Aorta (tissue), 5 donors: ENCODE measurements at regions of chr15 and their contacts with region 1.

Region 1: DNA sequence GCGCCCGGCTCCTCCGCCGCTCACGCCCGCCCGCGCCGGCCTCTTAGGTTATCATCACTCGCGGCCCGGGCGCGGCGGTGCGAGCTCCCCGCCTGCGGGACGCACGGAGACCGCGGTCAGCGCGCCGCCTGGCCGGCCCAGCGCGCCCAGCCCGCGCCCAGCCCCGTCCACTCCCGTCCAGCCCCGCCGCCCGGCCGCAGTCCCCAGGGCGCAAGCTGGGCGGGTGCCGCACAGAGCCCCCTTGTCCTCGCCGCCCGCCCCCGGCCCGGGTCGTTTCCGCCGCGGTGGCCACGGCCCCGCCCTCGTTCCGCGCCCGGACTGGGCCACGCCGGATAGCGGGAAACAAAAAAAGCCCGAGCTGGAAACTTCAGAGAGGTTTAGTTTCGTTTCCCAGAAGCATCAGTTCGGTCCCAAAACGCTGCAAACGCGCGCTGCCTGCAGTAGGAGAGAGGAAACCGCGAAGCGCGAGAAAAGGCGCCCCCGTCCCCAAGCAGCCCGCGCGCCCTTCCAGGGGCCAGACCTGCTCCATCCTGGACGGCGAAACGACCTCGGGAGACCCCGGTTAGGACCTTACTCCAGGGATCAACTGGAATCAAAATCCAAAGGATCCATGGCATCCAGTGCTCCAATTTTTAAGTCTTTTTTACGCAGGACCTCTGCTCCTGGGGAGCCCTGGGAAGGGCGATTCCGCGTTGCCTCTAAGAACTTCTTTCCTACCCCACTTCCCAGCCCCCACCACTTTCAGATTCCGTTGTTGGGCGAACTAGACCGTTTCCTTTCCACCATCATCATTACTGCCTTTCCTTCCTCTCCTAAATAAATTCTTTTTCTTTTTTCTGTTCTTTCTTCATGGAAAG is at the start of gene ATP10A:
- DNase-seq: peak; percentile 68 to 88
- ATAC-seq: peak; percentile 24
- H3K4me3 ChIP-seq: peak within 1 kb of the TSS; percentile 64 to 96
- H3K27ac ChIP-seq: peak within 1 kb of the TSS; percentile 77 to 82
- H3K4me1 ChIP-seq: no peaks in the 10 kb centered on the region
- H3K27me3 ChIP-seq: no peaks in the 10 kb centered on the region
- total RNA-seq, gene ATP10A: 19.9 to 55.0 TPM

Region 2: GRCh38 chr15:25532269-25533140 is 330.8 kb before region 1 on chr15:
- intact Hi-C with region 1: no loop called
- DNase-seq: no peak
- ATAC-seq: no peak
- H3K4me3 ChIP-seq: no peak overlapping the region
- H3K27ac ChIP-seq: no peak overlapping the region
- H3K4me1 ChIP-seq: peaks cover 2 to 3% of the 10 kb centered on the region in 2 donors
- H3K27me3 ChIP-seq: no peaks in the 10 kb centered on the region

Region 3: GRCh38 chr15:25693321-25694237 is 169.8 kb before region 1 on chr15:
- intact Hi-C with region 1: loop called in 1 of 2 experiments (anchors 5 kb)
- DNase-seq: peak; percentile 62 to 81
- ATAC-seq: peak; percentile 73
- H3K4me3 ChIP-seq: no peak overlapping the region
- H3K27ac ChIP-seq: no peak overlapping the region
- H3K4me1 ChIP-seq: no peaks in the 10 kb centered on the region
- H3K27me3 ChIP-seq: no peaks in the 10 kb centered on the region

Region 4: DNA sequence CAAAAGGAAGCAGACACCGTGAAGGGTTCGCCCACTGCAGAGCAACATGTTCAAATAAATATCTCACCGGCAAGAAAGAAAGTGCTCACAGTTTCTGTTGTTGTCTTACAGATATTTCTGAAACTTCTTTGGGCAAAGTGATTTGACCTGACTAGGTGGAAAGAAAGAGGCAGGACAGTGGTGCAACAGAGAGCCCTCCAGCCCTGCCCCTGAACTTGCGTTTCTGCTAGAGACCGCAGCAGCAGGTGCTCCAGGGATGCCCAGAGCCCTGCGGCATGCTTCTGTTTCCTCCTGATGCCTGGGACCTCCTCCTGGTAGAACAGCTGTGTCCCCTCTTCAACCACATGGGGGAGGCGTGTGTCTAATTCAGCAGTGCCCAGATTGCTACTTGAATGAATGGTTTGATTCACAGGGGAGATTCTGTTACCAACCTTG is 123.6 kb before region 1 on chr15:
- intact Hi-C with region 1: loop called (anchors 5 kb)
- DNase-seq: no peak
- ATAC-seq: no peak
- H3K4me3 ChIP-seq: no peak overlapping the region
- H3K27ac ChIP-seq: peak overlapping the region in 1 of 2 donors; percentile 56
- H3K4me1 ChIP-seq: peaks cover 0 to 22% of the 10 kb centered on the region in 2 donors
- H3K27me3 ChIP-seq: no peaks in the 10 kb centered on the region

Region 5: GRCh38 chr15:25830844-25831451 is 32.4 kb before region 1 on chr15:
- intact Hi-C with region 1: loop called in 1 of 2 experiments (anchors 5 kb)
- DNase-seq: peak; percentile 88 to 93
- ATAC-seq: peak; percentile 90
- H3K4me3 ChIP-seq: no peak overlapping the region
- H3K27ac ChIP-seq: peak overlapping the region; percentile 34 to 98
- H3K4me1 ChIP-seq: peaks cover 9 to 11% of the 10 kb centered on the region in 2 donors
- H3K27me3 ChIP-seq: no peaks in the 10 kb centered on the region

Region 6: DNA sequence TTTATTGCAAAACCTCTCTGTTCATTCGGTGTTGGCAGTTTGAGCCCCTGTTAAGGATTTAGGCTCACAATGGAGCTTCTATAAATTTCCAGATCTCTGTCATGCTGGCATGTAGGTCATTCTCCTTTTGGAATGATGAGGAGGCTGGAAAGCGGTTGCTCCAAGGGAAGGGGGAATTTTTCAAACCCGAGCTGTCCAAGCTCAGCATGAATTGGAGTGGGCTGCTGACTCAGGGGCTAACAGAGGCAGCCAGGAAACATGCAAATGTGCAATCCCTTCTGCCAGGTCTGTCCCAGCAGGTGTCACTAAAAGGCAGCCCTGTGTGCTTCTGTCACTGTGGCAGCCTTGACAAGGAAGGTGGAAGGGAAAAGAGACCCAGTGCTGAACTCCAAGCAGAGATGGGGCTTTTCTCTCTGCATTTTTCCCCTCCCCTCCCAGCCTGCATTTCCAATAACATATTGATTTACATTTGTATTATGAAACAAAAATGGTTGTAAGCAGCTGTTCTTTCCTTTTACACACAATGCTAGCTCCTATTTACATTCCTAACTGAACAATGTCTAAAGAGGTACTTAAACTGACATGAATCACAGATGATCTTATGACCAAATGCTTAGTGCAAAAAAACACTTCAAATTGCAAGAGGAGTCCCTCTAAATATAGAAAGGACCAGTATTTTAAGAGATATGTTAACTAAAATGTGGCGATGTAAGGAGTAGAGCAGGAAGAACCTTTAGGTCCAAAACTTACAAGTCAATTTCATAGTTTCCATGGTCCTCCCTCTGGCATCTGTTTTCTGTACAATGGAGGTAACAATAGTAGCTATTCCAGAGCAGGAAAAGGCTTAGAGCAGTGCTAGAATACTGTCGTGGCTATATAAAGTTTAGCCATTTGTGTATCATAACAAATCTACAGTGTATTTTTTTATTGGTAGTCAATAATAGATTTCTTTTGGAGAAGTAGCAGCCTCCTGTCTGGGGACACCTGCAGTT is 84.3 kb after region 1 on chr15:
- intact Hi-C with region 1: no loop called
- DNase-seq: no peak
- ATAC-seq: no peak
- H3K4me3 ChIP-seq: no peak overlapping the region
- H3K27ac ChIP-seq: no peak overlapping the region
- H3K4me1 ChIP-seq: no peaks in the 10 kb centered on the region
- H3K27me3 ChIP-seq: no peaks in the 10 kb centered on the region